Heart right ventricle (tissue), 16 donors: ENCODE measurements at regions of chr10 and their contacts with region 1.

Region 1: GRCh38 chr10:122980209-122981065 is at the start of gene PSTK:
- DNase-seq: peak; percentile 92 to 93
- ATAC-seq: peak; percentile 98 to 100 (median 100)
- H3K4me3 ChIP-seq: peak within 1 kb of the TSS; percentile 56 to 94 (median 80)
- H3K27ac ChIP-seq: peak within 1 kb of the TSS; percentile 89 to 97 (median 94)
- H3K4me1 ChIP-seq: peaks cover 0 to 17% (median 11%) of the 10 kb centered on the region in 9 donors
- H3K27me3 ChIP-seq: no peaks in the 10 kb centered on the region
- CTCF ChIP-seq: peak; percentile 79 to 98 (median 96)
- total RNA-seq, gene PSTK: 1.4 to 3.7 (median 2.2) TPM

Region 2: DNA sequence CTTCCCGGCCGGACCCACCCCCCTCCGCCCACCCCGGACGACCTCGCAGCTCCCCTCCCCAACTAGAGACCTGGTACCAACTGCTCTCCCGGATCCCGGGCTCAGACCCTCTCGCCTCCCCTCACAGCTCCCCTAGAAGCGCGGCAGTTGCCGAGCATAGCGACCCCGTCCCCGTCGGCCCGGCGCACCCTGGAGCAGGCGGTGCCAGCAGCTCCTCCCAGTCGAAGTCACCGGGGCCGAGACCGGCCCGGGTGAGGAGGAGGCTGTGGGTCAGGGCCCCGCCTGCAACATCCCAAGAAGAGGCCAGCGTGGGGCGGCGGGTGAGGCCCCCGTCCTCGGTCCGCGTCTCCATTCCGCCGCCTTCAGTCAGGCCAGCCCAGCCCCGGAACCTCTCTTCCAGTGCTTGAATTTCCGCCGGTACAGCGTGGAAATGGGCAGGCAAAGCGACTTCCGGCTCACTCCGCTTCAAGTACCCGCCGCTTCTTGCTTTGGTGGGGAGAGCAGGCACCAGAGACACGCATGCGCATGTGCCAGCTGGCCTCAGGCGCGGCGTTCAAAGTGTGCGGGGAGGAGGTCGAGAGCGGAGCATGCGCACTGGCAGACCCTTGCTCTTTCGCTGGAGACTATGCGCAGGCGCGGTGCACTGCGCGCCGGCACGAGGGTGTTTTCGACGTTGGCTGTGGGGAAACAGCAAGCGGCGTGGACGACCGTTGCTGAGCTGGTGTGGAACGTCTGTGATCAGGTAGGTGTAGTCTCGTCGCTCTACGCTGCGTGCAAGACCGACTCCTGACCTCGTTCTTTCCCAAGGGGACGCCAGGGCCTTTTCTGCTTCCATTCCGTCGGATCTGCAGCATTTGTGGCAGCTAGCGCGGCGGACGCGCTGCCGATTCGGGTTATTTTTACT is 26.4 kb before region 1 on chr10 and contains the start of gene C10orf88:
- intact Hi-C with region 1: loop called in 1 of 10 experiments (anchors 2 kb)
- DNase-seq: peak; percentile 96 to 98
- ATAC-seq: peak; percentile 98 to 100 (median 99)
- H3K4me3 ChIP-seq: peak within 1 kb of the TSS; percentile 57 to 93 (median 86)
- H3K27ac ChIP-seq: peak within 1 kb of the TSS in 9 of 10 donors; percentile 31 to 92 (median 77)
- H3K4me1 ChIP-seq: peaks cover 4 to 26% (median 18%) of the 10 kb centered on the region in 9 donors
- H3K27me3 ChIP-seq: no peaks in the 10 kb centered on the region
- CTCF ChIP-seq: no peak
- total RNA-seq, gene C10orf88: 4.9 to 8.4 (median 6.3) TPM

Region 3: GRCh38 chr10:123008439-123009205 is 28.2 kb after region 1 on chr10 and contains the starts of genes ACADSB and IKZF5:
- intact Hi-C with region 1: loop called in 2 of 10 experiments (anchors 1 to 2 kb)
- DNase-seq: peak; percentile 94 to 98
- ATAC-seq: peak; percentile 97 to 99 (median 98)
- H3K4me3 ChIP-seq: peak within 1 kb of the TSS; percentile 71 to 97 (median 88)
- H3K27ac ChIP-seq: peak within 1 kb of the TSS; percentile 55 to 96 (median 90)
- H3K4me1 ChIP-seq: peaks cover 4 to 55% (median 42%) of the 10 kb centered on the region in 9 donors
- H3K27me3 ChIP-seq: no peaks in the 10 kb centered on the region
- CTCF ChIP-seq: no peak
- total RNA-seq, gene ACADSB: 54.6 to 114 (median 96.4) TPM
- total RNA-seq, gene IKZF5: 7.8 to 14.4 (median 10.9) TPM

Region 4: DNA sequence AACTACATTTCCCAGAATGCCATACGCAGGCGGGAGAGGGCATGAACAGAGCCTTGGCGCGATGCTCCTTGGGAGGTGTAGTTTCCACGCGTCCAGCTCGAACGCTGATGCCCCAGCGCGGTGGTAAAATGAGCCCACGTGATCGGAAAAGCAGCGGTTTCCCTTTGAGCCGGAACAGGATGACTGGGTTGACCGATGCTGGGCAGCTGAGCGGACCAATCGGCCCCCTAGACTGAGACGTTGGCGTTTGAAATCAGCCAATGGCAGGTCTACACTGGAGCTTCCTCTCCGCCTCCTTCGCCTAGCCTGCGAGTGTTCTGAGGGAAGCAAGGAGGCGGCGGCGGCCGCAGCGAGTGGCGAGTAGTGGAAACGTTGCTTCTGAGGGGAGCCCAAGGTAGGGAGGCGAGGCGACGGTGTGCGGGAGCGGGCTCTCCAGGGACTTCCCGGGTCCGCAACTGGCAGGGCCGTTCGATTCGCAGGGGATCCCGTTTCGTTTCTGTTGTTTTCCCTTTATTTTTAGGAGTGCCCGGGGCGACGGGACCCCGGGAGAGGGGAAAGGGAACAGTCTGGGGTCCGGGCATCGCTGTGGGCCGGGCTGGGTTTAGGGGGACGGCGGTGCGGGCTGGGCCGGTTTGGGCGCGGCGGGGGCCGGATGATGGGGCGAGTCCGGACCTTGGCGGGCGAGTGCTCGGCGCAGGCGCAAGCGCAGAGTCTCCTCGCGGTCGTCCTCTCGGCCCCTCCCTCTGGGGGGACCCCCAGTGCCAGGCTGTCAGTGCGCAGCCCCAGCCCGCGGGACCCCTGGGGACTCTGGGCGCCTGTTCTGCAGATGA is 173.9 kb after region 1 on chr10 and contains the start of gene BUB3:
- intact Hi-C with region 1: loop called in 1 of 10 experiments (anchors 10 kb)
- DNase-seq: peak; percentile 96 to 99
- ATAC-seq: peak; percentile 97 to 100 (median 99)
- H3K4me3 ChIP-seq: peak within 1 kb of the TSS; percentile 64 to 97 (median 85)
- H3K27ac ChIP-seq: peak within 1 kb of the TSS in 9 of 10 donors; percentile 81 to 97 (median 90)
- H3K4me1 ChIP-seq: peaks cover 11 to 74% (median 37%) of the 10 kb centered on the region in 9 donors
- H3K27me3 ChIP-seq: peaks cover 21 to 43% (median 42%) of the 10 kb centered on the region in 7 donors
- CTCF ChIP-seq: peak in 5 of 9 donors; percentile 16 to 57 (median 51)
- total RNA-seq, gene BUB3: 24.4 to 40.9 (median 30.4) TPM